Transverse colon (tissue), 4 donors: ENCODE measurements at regions of chr11 and their contacts with region 1.

Region 1: GRCh38 chr11:108135845-108136544 is 14.6 kb downstream of the ACAT1 start:
- DNase-seq: no peak
- H3K4me3 ChIP-seq: no peak overlapping the region
- H3K27ac ChIP-seq: no peak overlapping the region
- H3K4me1 ChIP-seq: no peaks in the 10 kb centered on the region
- H3K27me3 ChIP-seq: no peaks in the 10 kb centered on the region
- CTCF ChIP-seq: no peak
- EP300 ChIP-seq: no peak
- POLR2A ChIP-seq: no peak

Region 2: GRCh38 chr11:108101090-108101775 is 34.8 kb before region 1 on chr11:
- in situ Hi-C with region 1: no loop called
- intact Hi-C with region 1: no loop called
- DNase-seq: no peak
- H3K4me3 ChIP-seq: no peak overlapping the region
- H3K27ac ChIP-seq: no peak overlapping the region
- H3K4me1 ChIP-seq: no peaks in the 10 kb centered on the region
- H3K27me3 ChIP-seq: no peaks in the 10 kb centered on the region
- CTCF ChIP-seq: no peak
- EP300 ChIP-seq: no peak
- POLR2A ChIP-seq: no peak

Region 3: GRCh38 chr11:108497317-108498045 is 361.5 kb after region 1 on chr11:
- in situ Hi-C with region 1: loop called in 1 of 4 experiments (anchors 25 kb)
- intact Hi-C with region 1: no loop called
- DNase-seq: peak; percentile 87
- H3K4me3 ChIP-seq: peak overlapping the region; percentile 68 to 78 (median 74)
- H3K27ac ChIP-seq: peak overlapping the region; percentile 95 to 98 (median 96)
- H3K4me1 ChIP-seq: peaks cover 0 to 32% (median 9%) of the 10 kb centered on the region in 4 donors
- H3K27me3 ChIP-seq: no peaks in the 10 kb centered on the region
- CTCF ChIP-seq: no peak
- EP300 ChIP-seq: peak; percentile 2
- POLR2A ChIP-seq: peak; percentile 75